PC-3 (cell line): ENCODE measurements at regions of chr12 and their contacts with region 1.

Region 1: DNA sequence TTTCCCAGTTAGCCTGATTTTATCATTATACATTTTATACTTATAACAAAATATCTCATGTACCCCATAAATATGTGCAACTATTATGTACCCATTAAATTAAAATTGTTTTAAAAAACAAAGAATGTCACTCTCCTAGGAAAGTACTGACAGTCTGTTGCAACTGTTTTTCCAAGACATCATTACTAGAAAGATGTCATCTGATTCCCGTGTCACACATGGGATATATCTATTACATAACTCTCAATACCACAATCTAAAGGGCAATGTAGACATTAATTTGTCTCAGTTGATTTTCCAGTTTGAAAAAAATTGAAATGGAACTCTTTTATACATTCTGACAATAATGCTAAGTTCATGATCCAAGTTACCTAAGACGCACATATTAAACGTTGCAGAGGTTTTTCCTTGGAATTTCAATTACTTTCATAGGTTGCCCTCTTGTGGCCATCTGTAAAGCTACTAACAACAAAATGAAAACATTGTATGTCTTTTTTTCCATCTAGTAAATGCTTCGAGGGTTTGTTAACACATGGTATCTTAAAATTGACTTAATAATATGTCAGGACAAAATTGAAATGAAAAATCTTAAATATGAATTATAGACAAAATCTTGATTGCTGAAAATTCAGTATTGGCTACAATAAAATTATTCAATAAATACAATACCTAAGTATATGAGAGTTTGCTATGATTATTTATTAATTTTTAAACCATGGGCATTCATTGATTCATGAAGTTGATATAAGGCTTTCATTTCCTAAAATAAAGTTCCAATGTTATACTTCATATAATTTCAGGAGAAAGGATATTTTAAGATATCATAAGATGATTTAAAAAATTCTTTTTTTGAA is 131.6 kb downstream of the PPFIA2 start:
- DNase-seq: peak; percentile 60
- ATAC-seq: 0 out of 2 replicates have a peak, but pooled peaks have one; percentile 22
- H3K4me3 ChIP-seq: no peak overlapping the region
- H3K27ac ChIP-seq: no peak overlapping the region
- H3K4me1 ChIP-seq: no peaks in the 10 kb centered on the region
- H3K27me3 ChIP-seq: no peaks in the 10 kb centered on the region
- CTCF ChIP-seq: peak; percentile 78

Region 2: GRCh38 chr12:81268664-81268926 is 359.0 kb before region 1 on chr12:
- CTCF ChIA-PET with region 1: no interaction called
- POLR2A ChIA-PET with region 1: no interaction called
- intact Hi-C with region 1: loop called (anchors 2 kb)
- DNase-seq: peak; percentile 77
- ATAC-seq: peak; percentile 96
- H3K4me3 ChIP-seq: peak overlapping the region; percentile 64
- H3K27ac ChIP-seq: no peak overlapping the region
- H3K4me1 ChIP-seq: no peaks in the 10 kb centered on the region; the same call in 1 of the 2 replicates
- H3K27me3 ChIP-seq: 0 out of 2 replicates have a peak, but pooled peaks cover 5% of the 10 kb centered on the region
- CTCF ChIP-seq: peak; percentile 73

Region 3: GRCh38 chr12:81329085-81329484 is 298.5 kb before region 1 on chr12:
- CTCF ChIA-PET with region 1: no interaction called
- POLR2A ChIA-PET with region 1: no interaction called
- intact Hi-C with region 1: no loop called
- DNase-seq: peak; percentile 7
- ATAC-seq: no peak
- H3K4me3 ChIP-seq: no peak overlapping the region
- H3K27ac ChIP-seq: no peak overlapping the region
- H3K4me1 ChIP-seq: no peaks in the 10 kb centered on the region
- H3K27me3 ChIP-seq: no peaks in the 10 kb centered on the region
- CTCF ChIP-seq: peak; percentile 56

Region 4: GRCh38 chr12:81450920-81451739 is 176.4 kb before region 1 on chr12:
- CTCF ChIA-PET with region 1: interaction called, 3 read pairs
- POLR2A ChIA-PET with region 1: no interaction called
- intact Hi-C with region 1: loop called (anchors 1 kb)
- DNase-seq: peak; percentile 72
- ATAC-seq: peak; percentile 73
- H3K4me3 ChIP-seq: no peak overlapping the region
- H3K27ac ChIP-seq: no peak overlapping the region
- H3K4me1 ChIP-seq: no peaks in the 10 kb centered on the region
- H3K27me3 ChIP-seq: no peaks in the 10 kb centered on the region
- CTCF ChIP-seq: peak; percentile 73

Region 5: GRCh38 chr12:81644503-81644902 is 16.9 kb after region 1 on chr12:
- CTCF ChIA-PET with region 1: no interaction called
- POLR2A ChIA-PET with region 1: no interaction called
- intact Hi-C with region 1: no loop called
- DNase-seq: peak; percentile 52
- ATAC-seq: 0 out of 2 replicates have a peak, but pooled peaks have one; percentile 31
- H3K4me3 ChIP-seq: no peak overlapping the region
- H3K27ac ChIP-seq: no peak overlapping the region
- H3K4me1 ChIP-seq: no peaks in the 10 kb centered on the region
- H3K27me3 ChIP-seq: no peaks in the 10 kb centered on the region
- CTCF ChIP-seq: peak; percentile 61

Region 6: DNA sequence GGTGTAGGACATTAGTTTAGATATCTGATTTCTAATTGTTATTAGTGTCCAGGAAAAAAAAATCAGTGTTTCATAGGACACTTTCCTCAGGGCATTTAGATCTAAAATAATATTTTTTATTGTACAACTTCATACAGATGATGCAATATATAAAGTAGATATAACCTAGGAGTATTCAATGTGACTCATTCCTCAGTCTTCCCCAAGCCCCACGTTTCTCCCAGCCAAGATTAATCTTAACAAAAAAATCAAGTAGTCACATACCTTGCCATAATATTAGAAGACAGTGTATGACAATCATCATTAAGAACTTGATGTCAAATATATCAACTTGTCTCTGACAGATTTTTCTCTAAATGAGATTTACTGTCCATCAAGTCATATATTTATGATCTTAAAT is 94.4 kb after region 1 on chr12:
- CTCF ChIA-PET with region 1: no interaction called
- POLR2A ChIA-PET with region 1: no interaction called
- intact Hi-C with region 1: no loop called
- DNase-seq: no peak
- ATAC-seq: no peak
- H3K4me3 ChIP-seq: no peak overlapping the region
- H3K27ac ChIP-seq: no peak overlapping the region
- H3K4me1 ChIP-seq: no peaks in the 10 kb centered on the region
- H3K27me3 ChIP-seq: no peaks in the 10 kb centered on the region
- CTCF ChIP-seq: no peak